CD4-positive, alpha-beta T cell (primary cell): ENCODE measurements at regions of chr2 and their contacts with region 1.

Region 1: GRCh38 chr2:20254731-20255130 is 29.8 kb upstream of the SDC1 start:
- DNase-seq: no peak
- ATAC-seq: no peak
- H3K4me3 ChIP-seq: no peak overlapping the region
- H3K4me3 Mint-ChIP-seq: no peak overlapping the region
- H3K27ac ChIP-seq: no peak overlapping the region
- H3K27ac Mint-ChIP-seq: no peak overlapping the region
- H3K4me1 ChIP-seq: no peaks in the 10 kb centered on the region
- H3K4me1 Mint-ChIP-seq: no peaks in the 10 kb centered on the region
- H3K27me3 ChIP-seq: no peaks in the 10 kb centered on the region
- H3K27me3 Mint-ChIP-seq: no peaks in the 10 kb centered on the region
- CTCF ChIP-seq: no peak

Region 2: DNA sequence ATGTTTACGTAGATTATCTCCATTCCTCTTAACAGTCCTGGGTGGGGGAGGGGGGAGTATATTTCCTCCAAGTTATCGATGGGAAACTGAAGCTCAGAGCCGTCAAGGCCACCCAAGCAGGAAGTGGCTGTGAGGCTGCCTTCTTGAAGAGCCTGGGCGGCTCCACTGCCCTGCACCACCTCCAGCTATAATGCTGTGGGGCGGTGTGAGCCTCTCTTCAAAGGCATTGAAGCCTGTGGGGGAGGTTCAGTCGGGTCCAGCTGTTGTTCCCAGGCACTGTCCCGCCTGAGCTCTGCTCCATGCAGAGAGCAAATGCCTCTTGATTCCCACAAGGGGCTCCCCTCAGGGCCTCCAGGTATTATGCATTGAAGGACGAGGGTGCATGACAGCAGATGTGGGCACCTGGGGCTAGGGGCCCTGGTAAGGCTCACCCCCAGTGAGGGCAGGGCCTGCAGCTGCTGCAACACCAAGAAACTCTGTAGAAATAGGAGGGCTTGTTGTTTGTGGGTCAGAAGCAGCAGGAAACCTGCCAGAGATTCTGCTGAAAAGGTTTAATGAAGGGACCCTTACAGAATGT is 173.8 kb before region 1 on chr2:
- CTCF ChIA-PET with region 1: no interaction called
- POLR2A ChIA-PET with region 1: no interaction called
- intact Hi-C with region 1: no loop called
- DNase-seq: no peak
- ATAC-seq: no peak
- H3K4me3 ChIP-seq: no peak overlapping the region
- H3K4me3 Mint-ChIP-seq: no peak overlapping the region
- H3K27ac ChIP-seq: no peak overlapping the region
- H3K27ac Mint-ChIP-seq: no peak overlapping the region
- H3K4me1 ChIP-seq: no peaks in the 10 kb centered on the region
- H3K4me1 Mint-ChIP-seq: no peaks in the 10 kb centered on the region
- H3K27me3 ChIP-seq: no peaks in the 10 kb centered on the region
- H3K27me3 Mint-ChIP-seq: no peaks in the 10 kb centered on the region
- CTCF ChIP-seq: no peak

Region 3: DNA sequence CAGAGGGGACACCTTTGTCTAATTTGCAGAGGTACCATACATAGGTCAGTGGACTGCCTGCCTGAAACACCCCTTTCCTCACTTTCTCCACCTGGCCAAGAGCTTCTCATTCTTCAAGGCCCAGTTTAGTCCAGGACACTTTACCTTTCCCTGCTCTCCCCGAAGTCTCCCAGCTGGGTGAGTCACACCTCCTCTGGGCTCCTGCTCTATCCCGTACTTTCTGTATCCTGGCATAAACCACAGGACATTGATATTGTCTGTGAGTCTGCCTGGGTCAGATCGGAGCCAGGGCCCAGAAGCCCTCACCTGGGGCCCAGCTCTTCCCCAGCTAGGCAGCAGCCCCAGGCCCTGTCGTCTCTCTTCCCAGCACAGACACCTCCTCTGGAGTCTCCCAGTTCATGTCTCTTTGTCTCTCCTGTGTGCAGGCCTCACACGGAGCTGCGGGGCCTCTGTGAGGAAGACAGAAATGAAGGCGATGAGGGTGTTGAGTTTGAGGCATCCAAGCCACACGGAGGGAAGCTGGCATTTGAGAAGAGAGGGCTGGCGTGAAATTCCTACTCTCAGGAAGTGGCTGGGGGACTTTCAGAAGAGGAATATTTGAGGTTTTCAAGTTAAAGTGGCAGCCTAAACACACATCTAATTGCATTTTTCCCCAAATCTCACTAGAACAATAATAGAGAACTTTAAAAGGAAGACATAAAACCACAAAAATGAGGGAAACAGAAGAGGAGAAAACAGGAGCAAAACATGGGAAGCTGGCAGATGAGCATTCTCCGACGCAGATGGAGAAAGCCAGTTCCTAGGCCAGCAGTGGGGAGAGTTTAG is 123.7 kb before region 1 on chr2:
- CTCF ChIA-PET with region 1: no interaction called
- POLR2A ChIA-PET with region 1: no interaction called
- intact Hi-C with region 1: no loop called
- DNase-seq: no peak
- ATAC-seq: no peak
- H3K4me3 ChIP-seq: no peak overlapping the region
- H3K4me3 Mint-ChIP-seq: no peak overlapping the region
- H3K27ac ChIP-seq: no peak overlapping the region
- H3K27ac Mint-ChIP-seq: no peak overlapping the region
- H3K4me1 ChIP-seq: no peaks in the 10 kb centered on the region
- H3K4me1 Mint-ChIP-seq: no peaks in the 10 kb centered on the region
- H3K27me3 ChIP-seq: peaks cover 0 to 5% of the 10 kb centered on the region in 2 experiments
- H3K27me3 Mint-ChIP-seq: peaks cover 37% of the 10 kb centered on the region
- CTCF ChIP-seq: no peak

Region 4: GRCh38 chr2:20207051-20207450 is 47.7 kb before region 1 on chr2:
- CTCF ChIA-PET with region 1: no interaction called
- POLR2A ChIA-PET with region 1: no interaction called
- intact Hi-C with region 1: no loop called
- DNase-seq: no peak
- ATAC-seq: no peak
- H3K4me3 ChIP-seq: no peak overlapping the region
- H3K4me3 Mint-ChIP-seq: no peak overlapping the region
- H3K27ac ChIP-seq: no peak overlapping the region
- H3K27ac Mint-ChIP-seq: no peak overlapping the region
- H3K4me1 ChIP-seq: no peaks in the 10 kb centered on the region
- H3K4me1 Mint-ChIP-seq: no peaks in the 10 kb centered on the region
- H3K27me3 ChIP-seq: no peaks in the 10 kb centered on the region
- H3K27me3 Mint-ChIP-seq: no peaks in the 10 kb centered on the region
- CTCF ChIP-seq: no peak

Region 5: DNA sequence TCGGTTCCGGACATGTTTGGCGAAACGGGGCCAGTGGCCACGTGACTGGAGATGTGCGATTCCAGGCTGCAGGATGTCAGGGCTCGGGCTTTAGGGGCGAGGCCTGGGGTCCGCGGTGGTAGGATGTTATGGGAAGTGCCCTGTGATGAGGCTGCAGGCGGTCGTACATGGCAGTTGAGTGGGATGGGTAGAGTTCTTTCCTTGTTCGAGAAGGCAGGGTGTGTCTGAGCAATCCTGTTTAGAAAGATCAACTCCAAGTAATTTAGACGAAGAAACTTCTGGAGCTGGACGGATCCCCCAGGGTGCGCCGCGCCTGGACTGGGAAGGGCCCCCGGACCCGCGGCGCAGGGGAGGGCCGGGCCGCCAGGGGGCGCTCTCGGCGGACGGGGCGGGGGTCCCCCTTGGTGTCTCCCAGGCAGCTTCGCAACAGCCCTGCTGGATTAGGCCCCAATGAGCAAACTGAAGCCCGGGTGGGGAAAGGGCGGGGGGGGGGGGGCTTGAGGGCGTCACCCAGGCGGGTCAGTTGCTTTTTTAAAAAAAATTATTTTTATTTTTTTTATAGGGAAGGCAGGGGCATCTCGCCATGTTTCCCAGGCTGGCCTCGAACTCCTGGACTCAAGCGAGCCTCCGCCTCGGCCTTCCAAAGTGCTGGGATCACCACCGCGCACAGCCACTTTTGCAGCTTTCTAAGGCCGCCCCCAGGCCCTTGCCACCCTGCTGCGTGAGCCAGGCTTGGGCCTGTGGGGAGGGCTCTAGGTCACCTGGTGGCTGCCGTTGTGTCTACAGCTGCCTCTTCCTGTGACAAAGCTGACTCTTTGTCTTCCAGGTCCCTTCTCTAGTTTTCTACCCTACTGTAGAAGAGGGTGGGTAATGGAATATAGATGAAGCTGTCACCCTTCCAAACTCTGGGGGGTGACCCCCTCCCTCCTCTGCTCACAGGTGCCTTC is 12.4 kb before region 1 on chr2:
- CTCF ChIA-PET with region 1: no interaction called
- POLR2A ChIA-PET with region 1: no interaction called
- intact Hi-C with region 1: no loop called
- DNase-seq: peak in 5 of 14 experiments; percentile 14 to 36 (median 33)
- ATAC-seq: peak; percentile 34
- H3K4me3 ChIP-seq: peak overlapping the region; percentile 11
- H3K4me3 Mint-ChIP-seq: peak overlapping the region; percentile 25
- H3K27ac ChIP-seq: no peak overlapping the region
- H3K27ac Mint-ChIP-seq: no peak overlapping the region
- H3K4me1 ChIP-seq: peaks cover 8% of the 10 kb centered on the region
- H3K4me1 Mint-ChIP-seq: peaks cover 10% of the 10 kb centered on the region
- H3K27me3 ChIP-seq: no peaks in the 10 kb centered on the region
- H3K27me3 Mint-ChIP-seq: peaks cover 6% of the 10 kb centered on the region
- CTCF ChIP-seq: peak; percentile 21

Region 6: GRCh38 chr2:20288642-20289340 is 34.1 kb after region 1 on chr2:
- CTCF ChIA-PET with region 1: no interaction called
- POLR2A ChIA-PET with region 1: no interaction called
- intact Hi-C with region 1: loop called in 1 of 2 experiments (anchors 5 kb)
- DNase-seq: no peak
- ATAC-seq: no peak
- H3K4me3 ChIP-seq: no peak overlapping the region
- H3K4me3 Mint-ChIP-seq: no peak overlapping the region
- H3K27ac ChIP-seq: no peak overlapping the region
- H3K27ac Mint-ChIP-seq: no peak overlapping the region
- H3K4me1 ChIP-seq: no peaks in the 10 kb centered on the region
- H3K4me1 Mint-ChIP-seq: peaks cover 18% of the 10 kb centered on the region
- H3K27me3 ChIP-seq: no peaks in the 10 kb centered on the region
- H3K27me3 Mint-ChIP-seq: no peaks in the 10 kb centered on the region
- CTCF ChIP-seq: no peak

Region 7: DNA sequence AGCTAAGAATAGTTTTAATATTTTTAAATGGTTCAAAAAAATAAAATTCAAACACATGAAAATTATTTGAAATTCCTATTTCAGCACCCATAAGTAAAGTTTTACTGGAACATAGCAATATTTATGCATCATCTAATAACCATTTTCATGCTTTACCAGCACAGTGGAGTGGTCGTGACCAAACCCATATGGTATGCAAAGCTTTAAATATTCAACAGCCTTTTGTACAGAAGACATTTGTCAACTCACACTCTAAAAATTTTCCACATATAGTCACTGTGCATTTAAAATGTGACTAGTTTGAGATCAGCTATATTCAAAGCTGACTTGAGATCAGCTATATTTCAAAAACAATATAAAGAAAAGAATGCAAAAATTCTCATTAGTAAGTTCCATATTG is 49.7 kb after region 1 on chr2:
- CTCF ChIA-PET with region 1: no interaction called
- POLR2A ChIA-PET with region 1: no interaction called
- intact Hi-C with region 1: loop called in 1 of 2 experiments (anchors 5 kb)
- DNase-seq: no peak
- ATAC-seq: no peak
- H3K4me3 ChIP-seq: no peak overlapping the region
- H3K4me3 Mint-ChIP-seq: no peak overlapping the region
- H3K27ac ChIP-seq: no peak overlapping the region
- H3K27ac Mint-ChIP-seq: peak overlapping the region; percentile 14
- H3K4me1 ChIP-seq: no peaks in the 10 kb centered on the region
- H3K4me1 Mint-ChIP-seq: peaks cover 16% of the 10 kb centered on the region
- H3K27me3 ChIP-seq: no peaks in the 10 kb centered on the region
- H3K27me3 Mint-ChIP-seq: no peaks in the 10 kb centered on the region
- CTCF ChIP-seq: no peak

Region 8: DNA sequence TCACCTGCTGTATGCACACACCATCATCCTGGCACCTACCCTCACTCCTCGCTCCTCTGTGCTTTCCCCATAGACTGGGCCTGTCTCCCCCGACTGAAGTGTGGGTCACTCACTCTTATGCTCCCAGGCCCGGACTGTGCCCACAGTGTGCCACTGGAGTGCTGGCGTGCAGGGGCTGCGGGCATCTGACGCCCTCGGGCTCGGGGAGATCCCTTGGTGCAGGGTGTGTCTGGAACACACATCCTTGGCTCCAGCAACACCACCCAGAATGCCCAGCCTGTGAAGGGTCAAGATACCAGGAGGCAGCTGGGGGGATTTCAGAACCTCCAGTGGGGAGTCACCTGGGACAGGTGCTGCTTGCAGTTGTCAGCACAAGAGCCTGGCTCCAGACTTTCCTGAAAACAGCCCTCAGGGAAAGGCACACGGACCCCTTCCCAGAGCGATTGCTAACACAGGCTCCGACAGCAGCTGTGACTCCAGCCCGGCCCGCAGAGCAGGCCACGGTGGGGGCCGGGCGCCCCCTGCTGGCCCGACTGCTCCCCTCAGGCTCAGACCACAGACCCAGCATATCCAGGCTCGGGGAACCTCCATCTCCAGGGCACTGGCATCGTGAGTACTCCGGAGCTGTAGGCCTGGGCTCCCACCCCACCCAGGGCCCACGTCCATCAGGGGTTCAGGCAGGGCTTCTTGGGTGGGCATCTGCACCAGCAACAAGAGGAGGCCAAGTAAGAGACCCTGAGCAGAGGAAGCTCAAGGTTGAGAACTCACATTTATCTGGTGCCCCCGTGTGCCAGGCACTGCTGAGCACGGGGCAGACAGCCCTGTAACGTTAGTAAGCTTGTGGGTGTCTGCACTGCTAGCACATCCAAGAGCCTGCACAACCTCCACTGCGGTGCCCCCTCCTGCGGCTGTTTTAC is 387.6 kb after region 1 on chr2:
- CTCF ChIA-PET with region 1: no interaction called
- POLR2A ChIA-PET with region 1: no interaction called
- intact Hi-C with region 1: loop called in 1 of 2 experiments (anchors 10 kb)
- DNase-seq: peak; percentile 53 to 86 (median 70)
- ATAC-seq: peak; percentile 99
- H3K4me3 ChIP-seq: no peak overlapping the region
- H3K4me3 Mint-ChIP-seq: no peak overlapping the region
- H3K27ac ChIP-seq: no peak overlapping the region
- H3K27ac Mint-ChIP-seq: no peak overlapping the region
- H3K4me1 ChIP-seq: peaks cover 10% of the 10 kb centered on the region
- H3K4me1 Mint-ChIP-seq: no peaks in the 10 kb centered on the region
- H3K27me3 ChIP-seq: no peaks in the 10 kb centered on the region
- H3K27me3 Mint-ChIP-seq: no peaks in the 10 kb centered on the region
- CTCF ChIP-seq: peak; percentile 84